OCI-LY7 (cell line): ENCODE measurements at regions of chr13 and their contacts with region 1.

Region 1: DNA sequence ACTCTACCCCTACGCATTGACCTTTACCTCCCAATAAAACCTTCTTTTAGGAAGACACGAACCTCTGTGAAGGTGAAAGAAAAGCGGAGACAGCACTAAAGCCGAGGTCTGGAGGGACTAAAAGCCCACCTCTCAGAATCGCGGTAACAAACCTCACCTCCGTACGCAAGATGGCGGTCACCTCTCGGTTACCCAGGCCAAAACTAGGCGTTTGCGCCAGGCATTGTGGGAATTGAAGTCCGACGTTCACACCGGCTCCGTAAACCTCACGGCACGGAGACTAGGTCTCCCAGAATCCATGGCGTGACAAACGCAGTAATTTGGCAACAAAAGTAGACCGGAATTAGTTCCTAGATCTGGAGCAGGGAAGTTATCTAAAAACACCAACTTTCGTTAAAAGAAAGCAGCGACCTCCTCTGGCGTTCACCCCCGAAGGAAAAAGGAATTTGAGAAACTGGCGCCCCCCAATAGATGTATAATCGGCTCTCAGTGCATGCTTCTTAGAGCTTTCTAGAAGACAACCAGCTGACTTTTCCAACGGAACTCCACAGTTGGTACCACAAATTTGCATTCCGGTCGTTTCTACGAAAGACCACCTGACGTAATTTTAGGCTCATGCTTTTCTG is at the start of gene N4BP2L2:
- DNase-seq: peak; percentile 95
- H3K4me3 ChIP-seq: peak within 1 kb of the TSS; percentile 83
- H3K27ac ChIP-seq: peak within 1 kb of the TSS; percentile 54
- H3K4me1 ChIP-seq: peaks cover 11% of the 10 kb centered on the region
- CTCF ChIP-seq: peak; percentile 57
- total RNA-seq, gene N4BP2L2: 54.2 and 57.5 TPM in 2 replicates

Region 2: DNA sequence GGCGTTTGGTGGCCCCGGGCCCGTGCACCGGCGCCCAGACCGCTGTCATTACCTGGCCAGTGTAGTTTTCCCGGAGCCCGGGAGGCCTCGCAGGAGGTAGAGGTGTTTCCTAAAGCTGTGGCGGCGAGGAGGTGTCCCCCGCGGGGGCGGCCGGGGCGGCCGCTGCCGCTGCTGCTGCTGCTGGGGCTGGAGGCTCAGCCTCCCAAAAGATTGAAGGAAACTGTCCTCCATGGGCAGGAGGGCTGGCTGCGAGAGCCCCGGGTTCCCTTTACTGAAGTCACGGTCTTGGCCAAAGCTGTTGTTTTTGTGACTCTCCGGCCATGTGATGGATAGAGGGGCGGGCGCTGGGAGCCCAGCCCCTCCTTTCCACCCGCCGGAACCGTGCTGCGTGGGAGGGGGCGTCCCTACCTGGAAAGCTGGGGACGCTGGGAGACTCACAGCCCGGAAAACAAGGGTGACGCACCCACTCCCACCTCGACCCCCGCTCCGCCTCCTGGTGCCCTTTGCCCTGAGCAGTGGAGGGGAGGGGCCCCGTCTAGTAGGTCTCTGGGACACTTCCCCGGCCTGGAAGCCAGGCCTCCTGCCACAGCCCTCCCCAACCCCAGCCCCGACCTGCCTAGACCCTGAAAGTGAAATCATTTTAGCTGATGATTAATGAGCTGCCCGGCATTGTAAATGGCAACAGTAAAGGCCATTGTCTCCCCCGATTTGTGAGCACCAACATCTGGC is 110.7 kb before region 1 on chr13 and contains the start of gene N4BP2L1:
- CTCF ChIA-PET with region 1: no interaction called
- POLR2A ChIA-PET with region 1: interaction called, 3 read pairs
- intact Hi-C with region 1: loop called (anchors 2 kb)
- DNase-seq: peak; percentile 66
- H3K4me3 ChIP-seq: peak within 1 kb of the TSS; percentile 96
- H3K27ac ChIP-seq: peak within 1 kb of the TSS; percentile 60
- H3K4me1 ChIP-seq: peaks cover 25% of the 10 kb centered on the region
- CTCF ChIP-seq: no peak
- total RNA-seq, gene N4BP2L1: 12.8 and 14.6 TPM in 2 replicates

Region 3: GRCh38 chr13:32474999-32475792 is 63.5 kb before region 1 on chr13:
- CTCF ChIA-PET with region 1: no interaction called
- POLR2A ChIA-PET with region 1: no interaction called
- intact Hi-C with region 1: no loop called
- DNase-seq: no peak
- H3K4me3 ChIP-seq: no peak overlapping the region
- H3K27ac ChIP-seq: no peak overlapping the region
- H3K4me1 ChIP-seq: no peaks in the 10 kb centered on the region
- CTCF ChIP-seq: no peak

Region 4: DNA sequence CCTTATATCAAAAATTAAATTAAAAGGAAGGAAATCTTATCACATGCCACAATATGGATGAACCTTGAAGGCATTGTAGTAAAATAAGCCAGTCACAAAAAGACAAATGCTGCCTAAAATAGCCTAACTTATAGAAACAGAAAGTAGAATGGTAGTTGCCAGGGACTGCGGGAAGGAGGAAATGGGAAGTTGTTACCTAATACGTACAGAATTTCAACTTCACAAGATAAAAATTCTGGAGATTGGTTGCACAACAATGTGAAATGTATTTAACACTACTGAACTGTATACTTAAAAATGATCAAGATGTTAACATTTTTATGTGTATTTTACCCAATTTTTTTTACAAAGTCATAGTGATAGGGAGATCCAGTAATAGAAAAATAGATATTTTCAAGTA is 10.1 kb after region 1 on chr13:
- CTCF ChIA-PET with region 1: no interaction called
- POLR2A ChIA-PET with region 1: no interaction called
- intact Hi-C with region 1: no loop called
- DNase-seq: no peak
- H3K4me3 ChIP-seq: no peak overlapping the region
- H3K27ac ChIP-seq: no peak overlapping the region
- H3K4me1 ChIP-seq: no peaks in the 10 kb centered on the region
- CTCF ChIP-seq: no peak

Region 5: DNA sequence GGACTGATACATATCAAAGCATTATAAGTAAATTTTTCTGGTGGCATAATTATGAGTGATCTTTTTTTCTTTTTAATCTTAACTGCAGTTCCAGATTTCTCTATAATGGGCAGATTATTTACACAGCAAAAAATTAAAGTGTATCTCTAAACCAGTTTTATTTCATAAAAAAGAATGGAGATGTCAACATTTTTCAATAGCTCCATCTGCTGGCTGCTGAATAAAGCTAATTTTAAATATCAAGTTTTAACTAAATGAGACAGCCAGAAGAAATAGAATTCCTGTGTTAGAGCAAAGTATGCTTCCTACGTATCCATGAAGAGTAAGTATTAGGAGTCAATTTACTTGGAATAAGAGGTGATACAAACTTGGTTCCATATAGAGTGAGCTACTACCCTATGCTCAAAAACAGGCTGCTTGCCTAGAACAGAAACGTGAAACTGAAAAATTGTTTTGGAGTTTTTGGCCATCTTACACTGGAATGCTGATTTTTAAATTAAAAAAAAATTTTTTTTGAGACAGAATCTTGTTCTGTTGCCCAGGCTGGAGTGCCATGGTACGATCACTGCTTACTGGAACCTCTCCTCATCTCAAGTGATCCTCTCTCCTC is 42.5 kb after region 1 on chr13:
- CTCF ChIA-PET with region 1: no interaction called
- POLR2A ChIA-PET with region 1: interaction called, 3 read pairs
- intact Hi-C with region 1: loop called (anchors 5 kb)
- DNase-seq: peak; percentile 52
- H3K4me3 ChIP-seq: no peak overlapping the region
- H3K27ac ChIP-seq: no peak overlapping the region
- H3K4me1 ChIP-seq: peaks cover 8% of the 10 kb centered on the region
- CTCF ChIP-seq: peak; percentile 91

Region 6: DNA sequence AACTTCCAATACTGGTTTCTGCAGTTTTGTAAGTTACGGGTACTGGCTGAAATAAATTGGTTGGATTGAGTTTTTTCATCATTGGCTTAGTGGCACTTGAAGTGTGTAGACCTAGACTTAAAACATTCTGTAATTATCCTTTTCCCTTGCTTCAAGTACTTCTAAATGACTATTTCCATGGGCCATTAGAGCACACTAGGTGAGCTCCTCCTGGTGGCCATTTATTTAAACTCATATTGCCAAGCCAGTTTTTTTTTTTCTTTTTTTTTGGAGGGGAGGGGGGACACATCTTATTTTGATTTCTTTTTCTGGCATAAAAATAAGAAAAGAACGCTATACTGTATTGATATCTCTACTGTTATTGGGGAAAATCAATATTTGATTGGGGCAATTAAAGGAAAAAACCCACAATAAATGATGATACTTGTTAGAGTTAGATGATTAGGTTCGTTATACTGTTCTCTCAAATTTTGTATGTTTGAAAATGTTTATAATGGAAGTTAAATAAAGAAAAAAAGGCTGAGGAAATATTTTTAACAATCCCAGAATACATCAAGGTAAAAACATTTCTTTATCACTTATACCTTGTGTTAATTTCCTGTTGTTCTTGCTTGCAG is 130.4 kb after region 1 on chr13:
- CTCF ChIA-PET with region 1: no interaction called
- POLR2A ChIA-PET with region 1: no interaction called
- intact Hi-C with region 1: no loop called
- DNase-seq: peak; percentile 79
- H3K4me3 ChIP-seq: no peak overlapping the region
- H3K27ac ChIP-seq: no peak overlapping the region
- H3K4me1 ChIP-seq: no peaks in the 10 kb centered on the region
- CTCF ChIP-seq: peak; percentile 91